GM10248 (cell line): ENCODE measurements at regions of chr11 and their contacts with region 1.

Region 1: DNA sequence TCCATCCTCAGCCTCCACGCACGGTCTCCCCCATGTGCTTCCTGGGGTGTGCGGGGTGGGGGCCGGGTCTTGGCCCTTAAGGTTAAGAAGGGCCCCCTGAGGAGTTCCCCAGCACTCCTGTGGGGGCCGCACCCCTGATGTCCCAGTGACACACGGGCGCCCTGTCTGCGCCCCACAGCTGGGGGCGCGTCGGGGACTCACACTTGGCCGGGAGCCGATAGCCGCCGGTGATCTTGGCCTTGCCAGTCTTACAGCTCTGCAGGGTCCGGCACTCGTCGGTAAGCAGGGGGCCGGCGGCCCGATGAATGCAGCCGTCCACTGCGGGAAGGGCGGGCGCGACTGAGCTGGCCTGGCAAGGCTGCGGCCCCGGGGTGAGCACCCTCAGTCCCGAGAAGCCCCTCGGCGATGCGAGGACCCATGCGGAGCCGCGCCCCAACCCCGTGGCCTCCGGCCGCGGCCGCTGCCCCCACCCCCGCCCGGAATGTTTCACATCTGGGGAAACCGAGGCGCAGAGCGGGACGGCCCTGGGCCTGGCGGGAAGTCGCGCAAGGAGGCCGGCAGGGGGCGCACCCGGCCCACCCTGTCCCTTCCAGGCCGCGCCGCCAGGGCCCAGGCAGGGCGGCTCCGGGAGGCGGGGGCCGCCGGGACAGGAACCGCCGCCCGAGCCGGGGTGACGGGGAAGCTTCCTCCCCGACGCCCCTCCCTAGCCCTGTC is 13.9 kb downstream of the OTUB1 start:
- DNase-seq: peak; percentile 90
- CTCF ChIP-seq: peak; percentile 87

Region 2: DNA sequence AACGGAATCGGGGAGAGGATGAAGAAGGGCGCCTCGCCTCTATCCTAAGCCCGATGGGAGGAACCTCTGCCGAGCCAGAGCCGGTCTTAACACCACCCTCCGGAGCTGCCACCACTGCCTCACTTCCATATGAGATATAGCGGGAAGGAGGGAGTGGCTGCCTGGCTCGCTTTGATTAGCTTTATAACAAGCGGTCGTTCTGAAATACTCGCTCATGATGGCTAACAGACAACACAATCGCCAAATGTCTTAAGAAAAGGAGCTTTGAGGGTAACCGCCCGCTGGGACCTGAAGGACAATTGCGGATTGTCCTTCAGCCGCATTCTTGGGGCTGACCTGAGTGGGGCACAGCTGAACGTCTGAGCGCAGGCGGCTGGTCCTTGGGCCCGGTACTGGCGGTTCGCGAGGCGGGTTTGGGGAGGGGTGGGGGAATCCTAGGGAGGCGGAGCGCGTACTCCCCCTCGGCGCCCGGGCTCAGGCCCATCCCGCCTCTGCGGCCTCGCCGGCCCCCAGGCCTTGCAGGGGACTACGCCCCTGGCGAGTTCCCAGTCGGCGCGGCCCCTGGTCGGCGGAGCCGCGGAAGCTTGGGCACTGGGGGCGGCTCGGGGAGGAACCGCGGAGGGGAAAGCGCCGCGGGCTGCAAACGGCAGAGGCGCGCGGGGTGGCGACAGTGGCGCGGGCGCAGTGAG is 509.5 kb before region 1 on chr11 and contains the start of gene PLAAT5:
- CTCF ChIA-PET with region 1: no interaction called
- POLR2A ChIA-PET with region 1: no interaction called
- DNase-seq: no peak
- CTCF ChIP-seq: no peak

Region 3: DNA sequence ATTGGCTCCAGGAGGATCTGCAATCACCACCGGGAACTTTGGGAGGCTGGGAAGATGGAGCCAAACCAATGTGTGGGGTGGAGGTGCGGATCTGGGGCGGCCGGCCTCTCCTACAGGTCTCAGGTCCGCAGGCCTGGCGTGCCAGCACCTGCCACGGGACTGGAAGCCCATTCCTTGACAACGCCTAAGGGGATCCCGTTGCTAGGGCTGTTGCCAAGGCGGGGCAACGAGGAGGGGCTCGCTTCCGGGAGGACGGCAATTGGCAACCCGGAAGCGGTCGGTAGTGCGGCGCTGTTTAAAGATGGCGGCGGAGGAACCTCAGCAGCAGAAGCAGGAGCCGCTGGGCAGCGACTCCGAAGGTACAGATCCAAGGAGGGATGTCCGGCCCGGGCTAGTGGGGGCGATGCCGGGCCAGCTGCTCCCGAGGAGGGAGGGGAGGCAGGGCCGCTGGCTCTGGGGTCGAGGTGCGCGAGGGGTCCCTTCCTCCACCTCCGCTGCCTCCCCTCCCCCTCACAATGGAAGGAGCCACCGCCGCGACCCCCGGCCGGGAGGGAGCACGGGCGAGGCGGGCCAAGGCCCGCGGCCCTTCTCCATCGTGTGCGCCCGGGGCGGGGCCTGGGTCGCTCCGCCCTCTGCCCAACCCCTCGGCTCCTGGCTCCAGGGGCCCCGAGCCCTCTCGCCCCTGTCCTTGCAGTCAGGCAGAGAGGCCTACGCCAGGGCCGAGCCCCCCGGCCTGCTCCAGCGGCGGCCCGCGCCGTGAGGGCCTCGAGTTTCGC is 13.8 kb before region 1 on chr11 and contains the start of gene OTUB1:
- CTCF ChIA-PET with region 1: interaction called, 24 read pairs
- POLR2A ChIA-PET with region 1: interaction called, 3 read pairs
- DNase-seq: peak; percentile 95
- CTCF ChIP-seq: no peak

Region 4: GRCh38 chr11:64015935-64016845 is 16.0 kb after region 1 on chr11:
- CTCF ChIA-PET with region 1: interaction called, 35 read pairs
- POLR2A ChIA-PET with region 1: no interaction called
- DNase-seq: no peak
- CTCF ChIP-seq: no peak

Region 5: DNA sequence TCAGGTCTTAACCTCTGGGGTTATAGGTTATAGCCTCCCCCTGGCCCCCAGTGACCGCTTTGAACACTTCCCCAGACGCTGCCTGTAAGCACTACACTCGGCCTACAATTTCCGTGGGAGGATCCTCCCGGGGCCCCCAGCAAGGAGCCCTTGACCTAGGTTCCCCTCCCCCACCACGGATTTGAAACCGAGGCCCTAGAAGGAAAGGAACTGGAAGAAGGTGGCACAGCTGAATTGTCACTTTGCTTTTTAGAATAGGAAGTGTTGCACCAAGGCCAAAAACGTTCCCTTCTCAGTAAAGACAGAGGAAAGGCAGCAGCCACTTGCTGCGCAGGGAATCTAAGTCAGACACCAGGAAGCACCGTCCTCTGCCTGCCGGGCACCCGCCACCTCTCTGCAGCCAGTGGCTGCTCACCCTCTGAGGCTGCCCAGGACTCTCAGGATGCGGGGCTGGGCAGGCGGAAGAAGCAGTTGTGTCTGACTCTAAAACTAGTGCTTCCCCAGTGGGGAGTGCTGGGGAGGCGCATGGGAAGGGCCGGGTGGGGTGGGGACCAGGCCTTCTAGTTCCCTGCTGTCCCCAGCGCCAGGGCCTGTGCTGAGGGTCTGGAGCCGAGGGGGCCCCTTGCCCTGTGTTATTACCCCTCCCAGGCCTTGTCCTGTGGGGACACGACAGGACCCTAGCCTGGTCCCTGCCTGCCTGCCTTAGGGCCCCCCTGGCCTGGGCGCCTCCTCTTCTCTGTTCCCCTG is 27.6 kb after region 1 on chr11:
- CTCF ChIA-PET with region 1: interaction called, 20 read pairs
- POLR2A ChIA-PET with region 1: no interaction called
- DNase-seq: no peak
- CTCF ChIP-seq: no peak